Naive thymus-derived CD8-positive, alpha-beta T cell (primary cell): ENCODE measurements at regions of chr4 and their contacts with region 1.

Region 1: GRCh38 chr4:4260253-4260652 is 12.2 kb upstream of the TMEM128 start:
- DNase-seq: peak in 5 of 10 donors; percentile 12 to 67 (median 32)
- ATAC-seq: peak; percentile 100
- H3K4me3 Mint-ChIP-seq: no peak overlapping the region
- H3K27ac Mint-ChIP-seq: peak overlapping the region in 5 of 10 donors; percentile 18 to 83 (median 60)
- H3K4me1 Mint-ChIP-seq: peaks cover 0 to 8% (median 3%) of the 10 kb centered on the region in 4 donors
- H3K27me3 Mint-ChIP-seq: no peaks in the 10 kb centered on the region

Region 2: GRCh38 chr4:4308800-4309441 is 48.7 kb after region 1 on chr4:
- POLR2A ChIA-PET with region 1: no interaction called
- DNase-seq: no peak
- ATAC-seq: no peak
- H3K4me3 Mint-ChIP-seq: no peak overlapping the region
- H3K27ac Mint-ChIP-seq: no peak overlapping the region
- H3K4me1 Mint-ChIP-seq: peaks cover 3 to 7% (median 6%) of the 10 kb centered on the region in 4 donors
- H3K27me3 Mint-ChIP-seq: no peaks in the 10 kb centered on the region

Region 3: GRCh38 chr4:4430492-4431197 is 170.4 kb after region 1 on chr4:
- POLR2A ChIA-PET with region 1: interaction called, 12 read pairs
- DNase-seq: peak; percentile 34 to 79 (median 54)
- ATAC-seq: peak; percentile 99 to 100
- H3K4me3 Mint-ChIP-seq: no peak overlapping the region
- H3K27ac Mint-ChIP-seq: peak overlapping the region in 4 of 10 donors; percentile 11 to 68 (median 48)
- H3K4me1 Mint-ChIP-seq: peaks cover 0 to 18% (median 5%) of the 10 kb centered on the region in 4 donors
- H3K27me3 Mint-ChIP-seq: no peaks in the 10 kb centered on the region